ENCODE measurements at regions of chr19 and their contacts with region 1.

Region 1: GRCh38 chr19:45038931-45039893 is at the start of gene CLASRP:
- DNase-seq: peak; percentile 86
- ATAC-seq: peak; percentile 94
- H3K4me3 ChIP-seq: peak within 1 kb of the TSS; percentile 91
- H3K27ac ChIP-seq: peak within 1 kb of the TSS; percentile 95
- H3K4me1 ChIP-seq: peaks cover 11% of the 10 kb centered on the region
- H3K27me3 ChIP-seq: no peaks in the 10 kb centered on the region
- CTCF ChIP-seq: no peak
- POLR2A ChIP-seq: peak; percentile 94
- RAD21 ChIP-seq: no peak
- total RNA-seq, gene CLASRP: 19.9 and 20.6 TPM in 2 replicates

Region 2: GRCh38 chr19:45027371-45027770 is 11.8 kb before region 1 on chr19:
- CTCF ChIA-PET with region 1: no interaction called
- POLR2A ChIA-PET with region 1: interaction called, 33 read pairs
- dilution Hi-C with region 1: no loop called
- in situ Hi-C with region 1: no loop called
- intact Hi-C with region 1: no loop called
- DNase-seq: no peak
- ATAC-seq: no peak
- H3K4me3 ChIP-seq: no peak overlapping the region
- H3K27ac ChIP-seq: no peak overlapping the region
- H3K4me1 ChIP-seq: no peaks in the 10 kb centered on the region
- H3K27me3 ChIP-seq: no peaks in the 10 kb centered on the region
- CTCF ChIP-seq: no peak
- POLR2A ChIP-seq: no peak
- RAD21 ChIP-seq: no peak

Region 3: GRCh38 chr19:45152504-45153338 is 113.5 kb after region 1 on chr19:
- CTCF ChIA-PET with region 1: no interaction called
- POLR2A ChIA-PET with region 1: no interaction called
- dilution Hi-C with region 1: no loop called
- in situ Hi-C with region 1: no loop called
- intact Hi-C with region 1: no loop called
- DNase-seq: peak; percentile 40
- ATAC-seq: peak; percentile 8
- H3K4me3 ChIP-seq: peak overlapping the region; percentile 19
- H3K27ac ChIP-seq: no peak overlapping the region
- H3K4me1 ChIP-seq: peaks cover 18% of the 10 kb centered on the region
- H3K27me3 ChIP-seq: peaks cover 20% of the 10 kb centered on the region
- CTCF ChIP-seq: no peak
- POLR2A ChIP-seq: no peak
- RAD21 ChIP-seq: no peak

Region 4: DNA sequence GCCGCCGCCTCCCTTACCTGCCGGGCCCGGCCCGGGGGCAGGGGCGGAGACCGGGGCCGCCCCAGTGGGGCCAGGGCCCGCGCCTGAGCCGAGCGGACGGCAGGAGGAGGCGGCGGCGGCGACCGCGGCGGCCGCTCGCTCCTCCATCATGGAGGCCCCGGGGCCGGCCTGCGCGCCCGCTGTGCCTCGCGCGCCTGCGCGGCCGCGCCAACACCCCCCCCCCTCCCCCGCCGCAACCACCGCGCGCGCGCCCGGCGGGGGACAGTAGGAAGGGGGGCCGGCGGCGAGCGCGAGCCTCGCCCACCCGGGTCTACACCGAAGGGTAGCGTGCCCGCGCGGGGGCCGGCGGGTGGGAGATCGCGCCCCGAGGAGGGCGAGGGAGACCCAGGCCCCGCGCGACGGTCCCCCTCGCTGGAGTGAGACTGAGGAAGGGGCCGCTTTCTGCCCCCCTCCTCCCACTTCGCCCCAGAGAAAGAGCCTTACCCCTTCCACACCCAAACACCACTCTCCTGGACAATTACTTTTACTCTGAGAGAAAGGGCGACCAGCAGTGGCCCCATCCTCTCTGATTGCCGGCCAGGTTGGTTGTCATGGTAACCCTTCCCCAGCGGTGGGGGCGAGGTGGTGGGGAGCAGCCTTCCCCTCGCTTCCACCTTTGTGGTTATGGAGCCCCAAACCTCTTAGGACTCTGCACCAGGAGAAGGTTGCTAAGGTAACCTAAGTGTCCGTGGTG is 1707.2 kb after region 1 on chr19 and contains the start of gene STRN4:
- CTCF ChIA-PET with region 1: no interaction called
- POLR2A ChIA-PET with region 1: no interaction called
- dilution Hi-C with region 1: no loop called
- in situ Hi-C with region 1: no loop called
- intact Hi-C with region 1: no loop called
- DNase-seq: no peak
- ATAC-seq: peak; percentile 81
- H3K4me3 ChIP-seq: peak within 1 kb of the TSS; percentile 98
- H3K27ac ChIP-seq: peak within 1 kb of the TSS; percentile 78
- H3K4me1 ChIP-seq: peaks cover 5% of the 10 kb centered on the region
- H3K27me3 ChIP-seq: no peaks in the 10 kb centered on the region
- CTCF ChIP-seq: no peak
- POLR2A ChIP-seq: peak; percentile 76
- RAD21 ChIP-seq: no peak
- total RNA-seq, gene STRN4: 36.7 and 37.8 TPM in 2 replicates

Measured in IMR-90 (cell line).